ENCODE measurements at regions of chr2 and their contacts with region 1.

Region 1: GRCh38 chr2:229921892-229922445 is at the start of gene TRIP12:
- DNase-seq: peak; percentile 97
- H3K4me3 ChIP-seq: peak within 1 kb of the TSS; percentile 85 to 95 (median 92)
- H3K27ac ChIP-seq: peak within 1 kb of the TSS; percentile 99 to 100 (median 100)
- H3K4me1 ChIP-seq: peaks cover 0 to 34% (median 30%) of the 10 kb centered on the region in 4 donors
- H3K27me3 ChIP-seq: no peaks in the 10 kb centered on the region
- CTCF ChIP-seq: no peak
- EP300 ChIP-seq: peak in 1 of 4 donors; percentile 23
- POLR2A ChIP-seq: peak in 1 of 2 donors; percentile 29
- total RNA-seq, gene TRIP12: 144 to 168 (median 159) TPM

Region 2: GRCh38 chr2:229800997-229801754 is 120.8 kb before region 1 on chr2:
- intact Hi-C with region 1: loop called (anchors 10 kb)
- DNase-seq: no peak
- H3K4me3 ChIP-seq: no peak overlapping the region
- H3K27ac ChIP-seq: peak overlapping the region in 1 of 4 donors; percentile 27
- H3K4me1 ChIP-seq: peaks cover 0 to 13% (median 2%) of the 10 kb centered on the region in 4 donors
- H3K27me3 ChIP-seq: no peaks in the 10 kb centered on the region
- CTCF ChIP-seq: peak in 3 of 4 experiments; percentile 44 to 68 (median 54)
- EP300 ChIP-seq: no peak
- POLR2A ChIP-seq: no peak

Region 3: GRCh38 chr2:229980431-229981184 is 58.6 kb after region 1 on chr2:
- intact Hi-C with region 1: loop called (anchors 2 kb)
- DNase-seq: peak; percentile 82
- H3K4me3 ChIP-seq: peak overlapping the region in 1 of 4 donors; percentile 25
- H3K27ac ChIP-seq: peak overlapping the region; percentile 61 to 77 (median 76)
- H3K4me1 ChIP-seq: peaks cover 0 to 21% (median 14%) of the 10 kb centered on the region in 4 donors
- H3K27me3 ChIP-seq: no peaks in the 10 kb centered on the region
- CTCF ChIP-seq: no peak
- EP300 ChIP-seq: no peak
- POLR2A ChIP-seq: no peak

Region 4: DNA sequence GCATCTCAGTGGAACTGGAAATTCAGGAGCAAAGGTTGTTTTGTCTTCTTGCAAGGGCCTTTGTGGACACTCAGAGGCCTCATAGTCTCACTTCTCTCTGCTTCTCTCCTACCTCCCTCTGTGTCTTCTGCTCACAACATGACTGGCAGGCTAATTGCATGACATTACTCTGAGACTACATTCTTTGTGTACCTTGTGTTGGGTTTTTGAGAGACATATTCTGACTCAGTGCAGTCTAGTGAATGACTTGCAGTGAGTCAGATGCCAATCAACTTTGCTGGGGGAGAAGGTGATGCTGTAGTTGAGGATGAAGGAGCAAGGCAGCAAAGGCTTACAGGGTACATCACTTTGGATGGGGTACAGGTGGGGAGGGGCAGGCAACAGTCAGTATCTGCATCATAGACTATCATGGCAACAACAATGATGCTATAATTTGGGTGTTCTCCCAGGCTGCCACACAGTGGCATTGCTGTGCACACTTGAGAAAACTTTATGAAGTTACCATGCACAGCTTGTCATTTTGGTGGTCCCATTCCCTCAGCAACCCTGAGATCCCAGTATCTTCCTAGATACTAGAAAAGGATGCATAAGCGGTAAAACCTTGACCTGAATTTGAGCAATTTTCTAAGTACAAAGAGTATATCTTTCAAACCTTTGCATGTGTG is 216.1 kb after region 1 on chr2:
- intact Hi-C with region 1: no loop called
- DNase-seq: no peak
- H3K4me3 ChIP-seq: no peak overlapping the region
- H3K27ac ChIP-seq: no peak overlapping the region
- H3K4me1 ChIP-seq: no peaks in the 10 kb centered on the region
- H3K27me3 ChIP-seq: no peaks in the 10 kb centered on the region
- CTCF ChIP-seq: no peak
- EP300 ChIP-seq: no peak
- POLR2A ChIP-seq: no peak

Measured in sigmoid colon (tissue), 7 donors.